ENCODE measurements at regions of chr5 and their contacts with region 1.

Region 1: DNA sequence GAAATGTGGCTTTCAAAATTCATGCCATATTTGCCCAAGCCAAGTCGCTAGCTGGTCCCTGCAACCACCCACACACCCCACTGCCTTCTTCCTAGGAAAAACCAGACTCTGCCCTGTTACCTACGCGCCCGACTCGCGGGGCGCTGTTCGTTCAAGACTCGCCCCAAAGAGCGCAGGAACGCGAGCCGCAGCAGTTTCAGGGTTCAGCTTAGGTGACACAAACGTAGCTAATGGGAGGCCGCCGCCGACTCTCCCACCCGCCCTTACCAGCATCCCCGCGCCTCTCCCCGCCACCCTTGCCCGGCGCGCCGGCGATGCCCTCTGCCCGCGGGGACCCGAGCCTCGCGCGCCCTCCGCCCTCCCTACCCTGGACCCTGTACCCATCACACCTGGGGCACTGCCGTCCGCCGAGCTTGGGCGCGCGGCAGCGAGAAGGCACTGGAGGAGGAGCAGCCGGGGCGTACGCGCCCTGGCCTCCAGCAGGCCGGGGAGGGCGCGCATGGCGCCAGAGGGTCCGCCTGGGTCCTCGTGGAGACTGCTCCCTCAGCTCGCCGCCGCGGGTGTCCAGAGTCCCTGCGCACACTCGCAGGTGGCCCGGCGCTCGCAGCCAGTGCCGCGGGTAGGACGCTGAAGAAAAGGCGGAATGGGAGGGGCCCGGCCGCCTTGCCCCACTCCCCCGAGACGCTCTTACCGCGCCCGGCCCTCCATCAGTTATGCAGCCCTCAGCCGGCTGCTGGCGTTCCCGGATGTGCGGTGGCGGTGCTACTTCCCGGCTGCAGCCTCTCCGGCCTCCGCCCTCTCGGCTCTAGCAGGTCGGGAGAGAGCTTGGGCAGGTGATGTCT is at the start of gene EMB:
- DNase-seq: peak; percentile 72
- H3K4me3 Mint-ChIP-seq: peak within 1 kb of the TSS; percentile 94
- H3K27ac Mint-ChIP-seq: peak within 1 kb of the TSS; percentile 97
- H3K4me1 Mint-ChIP-seq: peaks cover 65% of the 10 kb centered on the region
- H3K27me3 Mint-ChIP-seq: peaks cover 2% of the 10 kb centered on the region
- total RNA-seq, gene EMB: 80.6 and 81.8 TPM in 2 replicates

Region 2: DNA sequence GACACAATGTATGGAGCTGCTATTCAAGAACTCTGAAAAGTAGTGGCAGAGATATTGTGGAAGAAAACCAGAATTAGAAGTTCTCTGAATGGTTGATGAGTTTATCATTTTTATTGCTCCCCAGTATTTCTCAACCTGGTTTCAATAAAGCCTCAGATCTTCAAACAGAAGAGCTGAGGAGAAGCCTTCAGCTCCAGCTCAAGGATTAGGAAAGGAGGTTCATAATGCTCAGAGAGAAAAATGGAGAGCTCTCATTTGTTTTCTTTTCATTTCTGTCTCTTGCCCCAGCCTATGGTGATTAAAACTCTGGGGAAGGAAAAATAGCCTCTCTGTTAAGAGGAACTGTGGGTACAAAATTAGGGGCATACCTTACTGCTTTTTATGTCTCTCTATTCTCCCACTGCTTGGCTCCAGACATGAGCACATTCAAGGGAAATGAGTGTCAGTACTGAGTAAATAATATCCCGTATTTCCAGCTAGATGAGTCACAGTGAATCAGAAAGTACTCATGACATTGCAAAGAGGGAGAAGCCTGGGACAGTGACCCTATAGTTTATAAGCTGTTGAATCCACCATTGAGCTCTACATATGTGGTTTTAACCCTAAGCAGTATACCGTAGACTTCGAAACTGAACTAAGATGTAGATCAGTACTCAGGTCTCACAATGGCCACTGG is 137.9 kb before region 1 on chr5:
- intact Hi-C with region 1: no loop called
- DNase-seq: no peak
- H3K4me3 Mint-ChIP-seq: no peak overlapping the region
- H3K27ac Mint-ChIP-seq: no peak overlapping the region
- H3K4me1 Mint-ChIP-seq: no peaks in the 10 kb centered on the region
- H3K27me3 Mint-ChIP-seq: peaks cover 2% of the 10 kb centered on the region

Region 3: GRCh38 chr5:50343715-50344114 is 97.2 kb before region 1 on chr5:
- intact Hi-C with region 1: no loop called
- DNase-seq: no peak
- H3K4me3 Mint-ChIP-seq: no peak overlapping the region
- H3K27ac Mint-ChIP-seq: no peak overlapping the region
- H3K4me1 Mint-ChIP-seq: no peaks in the 10 kb centered on the region
- H3K27me3 Mint-ChIP-seq: peaks cover 12% of the 10 kb centered on the region

Region 4: GRCh38 chr5:50415912-50416311 is 25.0 kb before region 1 on chr5:
- intact Hi-C with region 1: loop called (anchors 2 kb)
- DNase-seq: peak; percentile 28
- H3K4me3 Mint-ChIP-seq: peak overlapping the region; percentile 12
- H3K27ac Mint-ChIP-seq: no peak overlapping the region
- H3K4me1 Mint-ChIP-seq: peaks cover 67% of the 10 kb centered on the region
- H3K27me3 Mint-ChIP-seq: no peaks in the 10 kb centered on the region

Region 5: GRCh38 chr5:50501491-50502228 is 60.8 kb after region 1 on chr5:
- intact Hi-C with region 1: loop called (anchors 1 kb)
- DNase-seq: no peak
- H3K4me3 Mint-ChIP-seq: peak overlapping the region; percentile 19
- H3K27ac Mint-ChIP-seq: no peak overlapping the region
- H3K4me1 Mint-ChIP-seq: peaks cover 24% of the 10 kb centered on the region
- H3K27me3 Mint-ChIP-seq: peaks cover 4% of the 10 kb centered on the region

Region 6: GRCh38 chr5:50595199-50595598 is 154.3 kb after region 1 on chr5:
- intact Hi-C with region 1: loop called (anchors 1 kb)
- DNase-seq: no peak
- H3K4me3 Mint-ChIP-seq: no peak overlapping the region
- H3K27ac Mint-ChIP-seq: no peak overlapping the region
- H3K4me1 Mint-ChIP-seq: peaks cover 55% of the 10 kb centered on the region
- H3K27me3 Mint-ChIP-seq: no peaks in the 10 kb centered on the region

Region 7: GRCh38 chr5:50751064-50751657 is 310.3 kb after region 1 on chr5:
- intact Hi-C with region 1: loop called (anchors 2 kb)
- DNase-seq: no peak
- H3K4me3 Mint-ChIP-seq: no peak overlapping the region
- H3K27ac Mint-ChIP-seq: no peak overlapping the region
- H3K4me1 Mint-ChIP-seq: peaks cover 41% of the 10 kb centered on the region
- H3K27me3 Mint-ChIP-seq: no peaks in the 10 kb centered on the region

Measured in activated T-helper 1 cell treated with anti-CD3 and anti-CD28 coated beads, Interleukin-12 subunit alpha, Interleukin-12 subunit beta, Interleukin-2, Interleukin-4 antibody, amounts not matched to agents 30 ng/mL and 10 ng/mL and 1 ng/mL, durations not matched to agents 14 hours and 24 hours and 36 hours (primary cell).